Activated CD4-positive, alpha-beta T cell treated with anti-CD3 and anti-CD28 coated beads for 36 hours (primary cell): ENCODE measurements at regions of chr9 and their contacts with region 1.

Region 1: GRCh38 chr9:111896353-111896958 is at the start of gene UGCG:
- DNase-seq: peak; percentile 94
- ATAC-seq: peak; percentile 88
- H3K4me3 Mint-ChIP-seq: no peak within 1 kb of the TSS
- H3K27ac Mint-ChIP-seq: peak within 1 kb of the TSS; percentile 90
- H3K4me1 Mint-ChIP-seq: peaks cover 25% of the 10 kb centered on the region
- H3K27me3 Mint-ChIP-seq: no peaks in the 10 kb centered on the region
- total RNA-seq, gene UGCG: 12.7 to 14.2 TPM

Region 2: GRCh38 chr9:111597817-111598729 is 298.4 kb before region 1 on chr9:
- CTCF ChIA-PET with region 1: no interaction called
- POLR2A ChIA-PET with region 1: no interaction called
- intact Hi-C with region 1: loop called in 1 of 2 experiments (anchors 2 kb)
- DNase-seq: peak; percentile 78
- ATAC-seq: peak; percentile 70
- H3K4me3 Mint-ChIP-seq: peak overlapping the region; percentile 75
- H3K27ac Mint-ChIP-seq: peak overlapping the region; percentile 33
- H3K4me1 Mint-ChIP-seq: peaks cover 21% of the 10 kb centered on the region
- H3K27me3 Mint-ChIP-seq: peaks cover 23% of the 10 kb centered on the region

Region 3: DNA sequence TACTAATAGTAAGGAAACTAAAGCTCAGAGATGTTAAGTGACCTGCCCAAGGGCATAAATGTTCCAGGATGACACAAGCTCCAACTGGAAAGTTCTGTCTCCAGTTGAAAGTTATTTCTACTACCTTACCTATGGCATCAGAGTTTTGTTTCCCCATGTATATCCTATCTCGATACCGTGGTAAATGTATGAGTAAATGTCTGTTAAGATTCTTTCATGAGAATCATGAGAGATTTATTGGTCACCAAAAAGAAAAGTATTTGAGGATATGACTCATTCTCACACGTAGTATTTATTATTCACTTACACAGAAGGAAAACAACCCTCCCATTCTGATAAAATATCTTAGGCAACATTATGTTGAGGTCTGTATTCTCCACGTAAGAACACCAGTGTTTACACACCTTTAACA is 90.6 kb before region 1 on chr9:
- CTCF ChIA-PET with region 1: interaction called, 3 read pairs
- POLR2A ChIA-PET with region 1: no interaction called
- intact Hi-C with region 1: loop called in 1 of 2 experiments (anchors 1 kb)
- DNase-seq: no peak
- ATAC-seq: peak; percentile 66
- H3K4me3 Mint-ChIP-seq: no peak overlapping the region
- H3K27ac Mint-ChIP-seq: peak overlapping the region; percentile 41
- H3K4me1 Mint-ChIP-seq: peaks cover 30% of the 10 kb centered on the region
- H3K27me3 Mint-ChIP-seq: no peaks in the 10 kb centered on the region

Region 4: DNA sequence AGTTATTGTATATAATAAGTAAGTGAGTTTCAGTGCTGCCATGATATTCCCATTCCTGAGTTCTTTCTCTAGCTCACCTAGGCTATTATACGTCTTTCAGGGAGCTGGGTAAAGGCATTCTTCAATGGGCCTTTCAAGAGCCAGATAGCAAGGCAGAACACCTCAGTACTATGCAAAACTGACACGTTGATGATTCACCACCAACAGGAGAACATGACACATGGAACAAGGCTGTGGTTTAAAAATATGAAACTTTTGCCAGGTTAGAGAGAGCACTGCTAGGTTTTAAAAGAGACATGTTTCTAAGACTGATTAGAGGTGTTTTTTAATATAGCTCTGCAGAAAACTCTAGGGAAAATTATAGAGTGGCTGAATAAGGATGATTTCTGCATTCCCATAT is 96.1 kb after region 1 on chr9:
- CTCF ChIA-PET with region 1: interaction called, 4 read pairs
- POLR2A ChIA-PET with region 1: no interaction called
- intact Hi-C with region 1: loop called (anchors 5 kb)
- DNase-seq: peak; percentile 62
- ATAC-seq: peak; percentile 92
- H3K4me3 Mint-ChIP-seq: no peak overlapping the region
- H3K27ac Mint-ChIP-seq: no peak overlapping the region
- H3K4me1 Mint-ChIP-seq: peaks cover 34% of the 10 kb centered on the region
- H3K27me3 Mint-ChIP-seq: peaks cover 2% of the 10 kb centered on the region

Region 5: DNA sequence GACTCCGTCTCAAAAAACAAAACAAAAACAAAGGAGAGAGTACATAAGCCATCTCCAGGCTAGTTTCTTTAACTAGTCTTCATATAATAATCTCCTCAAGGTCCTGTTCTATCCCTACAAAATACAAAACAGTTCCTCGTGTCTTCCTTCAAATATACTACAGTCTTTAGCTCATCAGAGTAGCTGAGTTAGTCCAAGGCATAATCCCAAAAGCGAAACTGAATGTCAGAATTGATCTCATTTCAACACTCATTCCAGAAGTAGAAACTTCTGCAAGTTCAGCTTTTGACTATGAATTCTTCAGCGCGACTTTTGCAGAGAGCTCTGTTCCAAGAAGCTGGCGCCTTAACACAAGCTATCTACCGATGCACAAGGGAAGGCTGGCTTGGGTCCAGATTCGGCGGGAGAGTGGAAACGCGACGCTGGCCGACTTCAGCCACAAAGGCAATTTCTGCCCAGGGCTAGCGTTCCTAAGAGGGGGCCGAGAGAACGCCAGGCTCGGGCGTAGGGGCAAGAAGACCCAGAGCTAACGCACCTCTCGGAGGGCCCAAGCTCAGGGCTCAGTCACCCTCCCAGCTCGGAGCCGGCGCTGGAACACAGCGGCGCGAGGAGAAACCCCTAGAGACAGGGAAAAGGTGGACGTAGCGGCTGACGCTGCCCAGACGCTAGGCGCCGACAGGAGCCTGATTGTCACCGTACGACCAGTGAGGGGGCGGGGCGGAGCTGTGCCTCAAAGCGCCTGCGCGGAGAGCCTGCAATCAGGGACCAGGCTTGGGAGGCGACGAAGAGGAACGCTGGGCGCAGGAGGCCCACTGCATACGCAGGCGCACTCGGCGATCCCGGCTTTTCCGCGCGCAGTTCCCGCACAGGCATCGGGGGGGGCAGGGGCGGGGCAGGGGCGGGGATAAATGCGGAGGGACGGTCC is 483.0 kb after region 1 on chr9:
- CTCF ChIA-PET with region 1: no interaction called
- POLR2A ChIA-PET with region 1: no interaction called
- intact Hi-C with region 1: loop called in 1 of 2 experiments (anchors 1 kb)
- DNase-seq: peak; percentile 99
- ATAC-seq: peak; percentile 93
- H3K4me3 Mint-ChIP-seq: peak overlapping the region; percentile 98
- H3K27ac Mint-ChIP-seq: peak overlapping the region; percentile 100
- H3K4me1 Mint-ChIP-seq: peaks cover 42% of the 10 kb centered on the region
- H3K27me3 Mint-ChIP-seq: no peaks in the 10 kb centered on the region

Region 6: GRCh38 chr9:112750111-112750767 is 853.8 kb after region 1 on chr9 and contains the start of gene SNX30:
- CTCF ChIA-PET with region 1: no interaction called
- POLR2A ChIA-PET with region 1: no interaction called
- intact Hi-C with region 1: loop called in 1 of 2 experiments (anchors 5 kb)
- DNase-seq: peak; percentile 83
- ATAC-seq: peak; percentile 45
- H3K4me3 Mint-ChIP-seq: peak within 1 kb of the TSS; percentile 83
- H3K27ac Mint-ChIP-seq: peak within 1 kb of the TSS; percentile 91
- H3K4me1 Mint-ChIP-seq: peaks cover 63% of the 10 kb centered on the region
- H3K27me3 Mint-ChIP-seq: no peaks in the 10 kb centered on the region
- total RNA-seq, gene SNX30: 4.2 to 4.6 TPM